ENCODE measurements at regions of chr12 and their contacts with region 1.

Region 1: DNA sequence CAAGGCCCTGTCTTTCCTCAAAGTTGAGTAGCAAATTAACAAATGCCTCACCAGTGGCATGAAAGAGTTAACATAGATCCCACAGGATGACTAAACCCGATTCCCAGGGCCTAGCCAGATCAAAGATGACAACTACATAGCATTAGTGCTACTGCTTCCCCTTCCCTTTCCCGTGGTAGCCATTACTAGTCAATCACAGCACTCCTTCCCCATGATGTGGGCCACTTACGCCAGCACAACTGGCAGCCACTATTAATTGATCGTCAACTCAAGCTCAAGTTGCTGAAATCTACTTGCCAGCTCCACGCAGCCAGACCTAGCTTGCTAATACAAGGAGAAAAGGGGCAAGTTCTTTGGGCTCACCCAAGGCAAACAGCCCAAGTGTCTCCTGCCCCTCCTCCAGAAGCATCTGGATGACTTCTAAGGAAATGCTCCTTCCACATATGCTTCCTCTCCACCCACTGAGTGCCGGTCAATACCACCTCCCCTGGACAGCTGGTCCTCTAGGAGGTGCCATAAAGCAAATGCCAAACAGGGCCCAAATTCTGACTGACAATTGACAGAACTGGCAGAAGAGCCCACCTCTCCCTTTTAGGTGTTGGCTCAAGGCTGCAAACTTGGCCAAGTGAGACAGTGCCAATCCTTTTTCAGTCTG is 72.6 kb downstream of the NUAK1 start:
- DNase-seq: peak; percentile 59
- H3K4me3 ChIP-seq: no peak overlapping the region
- H3K27ac ChIP-seq: peak overlapping the region; percentile 36
- H3K4me1 ChIP-seq: peaks cover 47% of the 10 kb centered on the region
- H3K27me3 ChIP-seq: no peaks in the 10 kb centered on the region
- CTCF ChIP-seq: no peak
- POLR2A ChIP-seq: no peak

Region 2: DNA sequence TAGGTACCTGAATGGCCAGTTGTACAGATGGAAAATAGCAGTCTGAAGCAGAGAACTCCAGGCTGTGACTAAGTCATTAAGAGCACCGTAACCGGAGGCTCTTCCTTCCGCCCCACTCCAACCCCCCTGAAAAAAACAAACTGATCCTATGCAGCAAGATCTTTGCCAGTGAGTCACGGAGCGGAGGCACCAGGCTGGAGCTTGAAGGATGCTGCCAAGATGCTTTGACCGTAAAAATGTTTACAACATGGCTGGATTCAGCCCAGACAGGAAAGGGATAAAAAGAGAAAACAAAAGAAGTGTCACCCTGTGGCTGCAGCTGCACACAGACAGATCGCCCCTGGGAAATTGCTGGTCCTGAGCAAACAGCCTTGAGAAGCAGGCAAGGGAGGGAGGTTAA is 131.9 kb before region 1 on chr12:
- CTCF ChIA-PET with region 1: interaction called, 4 read pairs
- POLR2A ChIA-PET with region 1: interaction called, 5 read pairs
- dilution Hi-C with region 1: no loop called
- intact Hi-C with region 1: loop called (anchors 1 kb)
- DNase-seq: peak; percentile 96
- H3K4me3 ChIP-seq: no peak overlapping the region
- H3K27ac ChIP-seq: peak overlapping the region; percentile 90
- H3K4me1 ChIP-seq: peaks cover 35% of the 10 kb centered on the region
- H3K27me3 ChIP-seq: no peaks in the 10 kb centered on the region
- CTCF ChIP-seq: no peak
- POLR2A ChIP-seq: no peak

Region 3: GRCh38 chr12:106022568-106023012 is 43.6 kb before region 1 on chr12:
- CTCF ChIA-PET with region 1: interaction called, 3 read pairs
- POLR2A ChIA-PET with region 1: no interaction called
- dilution Hi-C with region 1: no loop called
- intact Hi-C with region 1: loop called (anchors 5 kb)
- DNase-seq: peak; percentile 13
- H3K4me3 ChIP-seq: no peak overlapping the region
- H3K27ac ChIP-seq: no peak overlapping the region
- H3K4me1 ChIP-seq: peaks cover 22% of the 10 kb centered on the region
- H3K27me3 ChIP-seq: no peaks in the 10 kb centered on the region
- CTCF ChIP-seq: no peak
- POLR2A ChIP-seq: no peak

Region 4: GRCh38 chr12:106078358-106079010 is 12.3 kb after region 1 on chr12:
- CTCF ChIA-PET with region 1: interaction called, 9 read pairs
- POLR2A ChIA-PET with region 1: interaction called, 7 read pairs
- dilution Hi-C with region 1: no loop called
- intact Hi-C with region 1: loop called (anchors 1 kb)
- DNase-seq: peak; percentile 77
- H3K4me3 ChIP-seq: no peak overlapping the region
- H3K27ac ChIP-seq: peak overlapping the region; percentile 62
- H3K4me1 ChIP-seq: peaks cover 32% of the 10 kb centered on the region
- H3K27me3 ChIP-seq: no peaks in the 10 kb centered on the region
- CTCF ChIP-seq: no peak
- POLR2A ChIP-seq: no peak

Region 5: DNA sequence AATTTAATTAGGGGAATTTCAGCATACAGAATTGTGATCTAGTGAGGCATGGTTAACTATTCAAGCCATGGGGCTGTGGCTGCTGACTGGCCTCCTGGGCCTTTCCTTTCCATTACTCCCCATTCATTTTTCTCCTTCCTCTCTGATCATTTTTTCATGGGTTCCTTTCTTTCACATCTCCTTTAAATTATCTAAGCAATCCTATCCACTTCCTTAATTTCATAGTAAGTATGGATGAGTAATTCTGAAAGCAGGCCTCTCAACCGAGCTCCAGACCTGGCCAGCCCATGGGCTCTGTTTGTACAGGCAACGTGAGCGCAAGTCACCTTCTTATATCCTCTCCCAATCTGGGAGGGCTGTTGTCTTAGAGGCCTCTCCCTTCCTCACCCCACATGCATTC is 168.3 kb after region 1 on chr12:
- CTCF ChIA-PET with region 1: no interaction called
- POLR2A ChIA-PET with region 1: no interaction called
- dilution Hi-C with region 1: no loop called
- intact Hi-C with region 1: no loop called
- DNase-seq: no peak
- H3K4me3 ChIP-seq: no peak overlapping the region
- H3K27ac ChIP-seq: no peak overlapping the region
- H3K4me1 ChIP-seq: no peaks in the 10 kb centered on the region
- H3K27me3 ChIP-seq: peaks cover 0 to 3% of the 10 kb centered on the region in 2 experiments
- CTCF ChIP-seq: no peak
- POLR2A ChIP-seq: no peak